ENCODE measurements at regions of chr5 and their contacts with region 1.

Region 1: DNA sequence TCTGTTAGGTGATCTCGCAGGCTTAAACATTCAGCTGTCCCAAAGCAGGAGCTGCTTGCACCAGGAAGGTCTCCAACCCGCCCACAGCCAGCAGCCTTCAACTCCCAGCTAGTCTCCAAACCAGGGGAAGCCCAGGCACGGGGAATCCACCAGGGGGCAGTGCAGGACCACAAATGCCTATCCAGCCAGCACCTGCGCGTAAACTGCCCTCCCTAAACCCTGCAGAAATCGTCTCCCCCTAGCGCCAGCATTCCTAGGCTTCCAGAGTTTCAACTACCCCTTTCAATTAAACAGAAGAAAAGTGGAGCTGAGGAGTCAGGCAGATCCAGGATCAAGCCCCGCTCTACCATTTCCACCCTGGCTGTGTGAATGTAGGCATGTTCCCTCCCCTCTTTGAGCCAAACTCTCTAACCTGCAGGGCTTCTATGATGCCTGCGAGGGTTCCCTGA is 72.0 kb downstream of the HRH2 start:
- DNase-seq: peak; percentile 95
- ATAC-seq: peak; percentile 97
- H3K4me3 Mint-ChIP-seq: no peak overlapping the region
- H3K27ac Mint-ChIP-seq: no peak overlapping the region
- H3K4me1 Mint-ChIP-seq: peaks cover 5% of the 10 kb centered on the region
- H3K27me3 Mint-ChIP-seq: peaks cover 15% of the 10 kb centered on the region

Region 2: DNA sequence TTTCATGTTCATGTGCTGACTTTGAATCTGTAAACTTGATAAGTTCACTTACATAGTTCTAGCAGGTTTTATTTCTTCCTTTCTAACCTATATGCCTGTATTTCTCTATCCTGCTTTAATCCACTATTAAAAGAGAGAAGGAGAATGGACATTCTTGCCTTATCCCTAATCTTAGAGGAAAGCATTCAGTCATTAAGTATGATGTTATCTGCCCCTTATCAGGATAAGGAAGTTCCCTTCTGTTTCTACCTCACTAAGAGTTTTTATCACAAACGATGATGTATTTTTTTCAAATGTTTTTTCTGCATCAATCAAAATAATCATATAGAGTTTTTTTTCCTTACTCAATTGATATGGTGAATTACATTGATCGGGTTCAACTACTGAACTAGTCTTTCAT is 318.9 kb before region 1 on chr5:
- CTCF ChIA-PET with region 1: no interaction called
- POLR2A ChIA-PET with region 1: no interaction called
- intact Hi-C with region 1: no loop called
- DNase-seq: no peak
- ATAC-seq: no peak
- H3K4me3 Mint-ChIP-seq: no peak overlapping the region
- H3K27ac Mint-ChIP-seq: no peak overlapping the region
- H3K4me1 Mint-ChIP-seq: no peaks in the 10 kb centered on the region
- H3K27me3 Mint-ChIP-seq: peaks cover 18% of the 10 kb centered on the region

Region 3: GRCh38 chr5:175617447-175617846 is 112.4 kb before region 1 on chr5:
- CTCF ChIA-PET with region 1: no interaction called
- POLR2A ChIA-PET with region 1: no interaction called
- intact Hi-C with region 1: no loop called
- DNase-seq: peak; percentile 22
- ATAC-seq: no peak
- H3K4me3 Mint-ChIP-seq: no peak overlapping the region
- H3K27ac Mint-ChIP-seq: no peak overlapping the region
- H3K4me1 Mint-ChIP-seq: peaks cover 19% of the 10 kb centered on the region
- H3K27me3 Mint-ChIP-seq: no peaks in the 10 kb centered on the region

Region 4: GRCh38 chr5:175741556-175741955 is 11.7 kb after region 1 on chr5:
- CTCF ChIA-PET with region 1: interaction called, 10 read pairs
- POLR2A ChIA-PET with region 1: no interaction called
- intact Hi-C with region 1: no loop called
- DNase-seq: no peak
- ATAC-seq: no peak
- H3K4me3 Mint-ChIP-seq: no peak overlapping the region
- H3K27ac Mint-ChIP-seq: no peak overlapping the region
- H3K4me1 Mint-ChIP-seq: no peaks in the 10 kb centered on the region
- H3K27me3 Mint-ChIP-seq: peaks cover 35% of the 10 kb centered on the region

Region 5: GRCh38 chr5:175746851-175747250 is 17.0 kb after region 1 on chr5:
- CTCF ChIA-PET with region 1: interaction called, 10 read pairs
- POLR2A ChIA-PET with region 1: no interaction called
- intact Hi-C with region 1: no loop called
- DNase-seq: no peak
- ATAC-seq: peak; percentile 57
- H3K4me3 Mint-ChIP-seq: no peak overlapping the region
- H3K27ac Mint-ChIP-seq: no peak overlapping the region
- H3K4me1 Mint-ChIP-seq: no peaks in the 10 kb centered on the region
- H3K27me3 Mint-ChIP-seq: peaks cover 29% of the 10 kb centered on the region

Region 6: GRCh38 chr5:175873088-175873454 is 143.2 kb after region 1 on chr5:
- CTCF ChIA-PET with region 1: interaction called, 7 read pairs
- POLR2A ChIA-PET with region 1: no interaction called
- intact Hi-C with region 1: loop called (anchors 2 to 5 kb)
- DNase-seq: peak; percentile 55
- ATAC-seq: no peak
- H3K4me3 Mint-ChIP-seq: no peak overlapping the region
- H3K27ac Mint-ChIP-seq: no peak overlapping the region
- H3K4me1 Mint-ChIP-seq: peaks cover 4% of the 10 kb centered on the region
- H3K27me3 Mint-ChIP-seq: peaks cover 53% of the 10 kb centered on the region

Measured in activated CD4-positive, alpha-beta T cell treated with anti-CD3 and anti-CD28 coated beads for 36 hours (primary cell).